Colonic mucosa (tissue), 4 donors: ENCODE measurements at regions of chr2 and their contacts with region 1.

Region 1: GRCh38 chr2:46776687-46777327 is 138.8 kb downstream of the MCFD2 start:
- DNase-seq: peak; percentile 74
- H3K4me3 ChIP-seq: no peak overlapping the region
- H3K27ac ChIP-seq: no peak overlapping the region
- H3K4me1 ChIP-seq: no peaks in the 10 kb centered on the region
- H3K27me3 ChIP-seq: no peaks in the 10 kb centered on the region
- CTCF ChIP-seq: peak; percentile 62

Region 2: GRCh38 chr2:46657042-46657504 is 119.7 kb before region 1 on chr2:
- intact Hi-C with region 1: loop called (anchors 2 kb)
- DNase-seq: peak; percentile 42
- H3K4me3 ChIP-seq: no peak overlapping the region
- H3K27ac ChIP-seq: no peak overlapping the region
- H3K4me1 ChIP-seq: no peaks in the 10 kb centered on the region
- H3K27me3 ChIP-seq: no peaks in the 10 kb centered on the region
- CTCF ChIP-seq: peak; percentile 14